ENCODE measurements at regions of chr15 and their contacts with region 1.

Region 1: GRCh38 chr15:68252925-68253534 is 23.5 kb upstream of the CLN6 start:
- DNase-seq: peak; percentile 76
- H3K4me3 ChIP-seq: no peak overlapping the region
- H3K27ac ChIP-seq: no peak overlapping the region
- H3K4me1 ChIP-seq: peaks cover 19% of the 10 kb centered on the region
- H3K27me3 ChIP-seq: no peaks in the 10 kb centered on the region
- CTCF ChIP-seq: peak; percentile 84 to 96

Region 2: GRCh38 chr15:68271854-68272471 is 18.9 kb after region 1 on chr15:
- CTCF ChIA-PET with region 1: no interaction called
- dilution Hi-C with region 1: no loop called
- in situ Hi-C with region 1: no loop called
- intact Hi-C with region 1: loop called (anchors 1 kb)
- DNase-seq: peak; percentile 100
- H3K4me3 ChIP-seq: no peak overlapping the region
- H3K27ac ChIP-seq: peak overlapping the region; percentile 100
- H3K4me1 ChIP-seq: peaks cover 71% of the 10 kb centered on the region
- H3K27me3 ChIP-seq: no peaks in the 10 kb centered on the region
- CTCF ChIP-seq: no peak

Region 3: DNA sequence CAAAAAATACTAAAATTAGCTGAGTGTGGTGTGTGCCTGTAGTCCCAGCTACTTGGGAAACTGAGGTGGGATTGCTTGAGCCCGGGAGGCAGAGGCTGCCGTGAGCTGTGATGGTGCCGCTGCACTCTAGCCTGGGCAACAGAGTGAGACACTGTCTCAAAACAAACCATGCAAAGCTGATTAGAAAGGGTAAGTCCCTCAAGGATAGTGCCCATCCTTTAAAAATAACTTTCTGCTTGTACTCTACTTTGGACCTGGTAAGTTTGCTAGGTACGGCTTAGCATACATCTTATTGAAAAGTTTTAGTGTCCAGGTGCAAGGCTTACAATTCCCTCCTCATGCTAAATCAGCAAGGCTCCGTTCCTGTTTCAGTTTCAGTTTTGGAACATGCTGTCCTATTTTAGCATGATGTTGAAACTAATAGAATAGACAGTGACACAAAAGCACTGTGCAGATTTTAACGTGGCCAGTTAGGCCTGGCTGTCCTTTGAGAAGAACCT is 45.9 kb after region 1 on chr15:
- CTCF ChIA-PET with region 1: interaction called, 8 read pairs
- dilution Hi-C with region 1: no loop called
- in situ Hi-C with region 1: loop called in 1 of 2 experiments (anchors 10 kb)
- intact Hi-C with region 1: no loop called
- DNase-seq: no peak
- H3K4me3 ChIP-seq: no peak overlapping the region
- H3K27ac ChIP-seq: no peak overlapping the region
- H3K4me1 ChIP-seq: peaks cover 5% of the 10 kb centered on the region
- H3K27me3 ChIP-seq: no peaks in the 10 kb centered on the region
- CTCF ChIP-seq: no peak

Region 4: DNA sequence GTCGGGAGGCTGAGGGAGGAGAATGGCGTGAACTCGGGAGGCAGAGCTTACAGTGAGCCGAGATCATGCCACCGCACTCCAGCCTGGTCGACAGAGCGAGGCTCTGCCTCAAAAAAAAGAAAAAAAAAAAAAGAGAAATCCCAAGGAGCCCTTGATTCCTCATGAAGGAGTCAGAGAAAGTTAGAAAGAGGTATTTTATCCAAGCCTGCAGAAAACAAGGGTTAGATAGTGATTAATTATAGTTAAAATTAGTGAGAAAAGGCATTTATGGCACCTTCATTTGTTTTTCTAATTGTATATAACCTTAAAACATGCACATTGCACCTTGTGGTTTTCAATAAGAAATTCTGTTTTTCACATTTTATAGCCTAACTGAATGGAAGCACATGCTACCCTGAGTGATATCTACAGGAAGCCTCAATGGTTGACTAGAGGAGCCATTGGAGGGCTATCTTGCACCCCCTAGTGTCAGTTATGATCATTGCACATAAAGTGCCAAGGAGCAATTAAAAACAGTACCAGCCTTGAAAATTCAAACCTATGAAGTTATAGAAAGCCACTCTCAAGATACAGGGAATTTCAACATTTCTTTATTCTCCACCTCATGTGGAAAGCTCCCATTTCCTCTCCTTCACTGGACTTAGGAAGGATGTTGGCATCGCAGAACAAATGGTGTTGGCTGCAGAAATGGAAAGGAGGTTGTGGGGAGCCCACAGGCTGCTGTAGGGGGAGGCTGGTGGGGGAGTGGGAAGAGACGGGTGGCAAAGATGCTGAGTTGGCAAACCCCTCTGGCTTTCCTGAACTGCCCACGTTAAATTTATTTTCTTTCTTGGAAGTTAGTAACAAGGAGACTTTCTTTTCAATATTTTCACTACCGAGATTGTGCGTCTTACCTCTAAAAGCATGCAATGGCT is 130.4 kb after region 1 on chr15:
- CTCF ChIA-PET with region 1: no interaction called
- dilution Hi-C with region 1: no loop called
- in situ Hi-C with region 1: loop called in 1 of 2 experiments (anchors 25 kb)
- intact Hi-C with region 1: loop called (anchors 1 kb)
- DNase-seq: peak; percentile 43
- H3K4me3 ChIP-seq: no peak overlapping the region
- H3K27ac ChIP-seq: no peak overlapping the region
- H3K4me1 ChIP-seq: peaks cover 18% of the 10 kb centered on the region
- H3K27me3 ChIP-seq: no peaks in the 10 kb centered on the region
- CTCF ChIP-seq: peak; percentile 80 to 95

Region 5: GRCh38 chr15:68550481-68551295 is 297.7 kb after region 1 on chr15:
- CTCF ChIA-PET with region 1: interaction called, 4 read pairs
- dilution Hi-C with region 1: no loop called
- in situ Hi-C with region 1: no loop called
- intact Hi-C with region 1: loop called (anchors 2 kb)
- DNase-seq: peak; percentile 37
- H3K4me3 ChIP-seq: no peak overlapping the region
- H3K27ac ChIP-seq: no peak overlapping the region
- H3K4me1 ChIP-seq: no peaks in the 10 kb centered on the region
- H3K27me3 ChIP-seq: no peaks in the 10 kb centered on the region
- CTCF ChIP-seq: peak; percentile 82 to 89

Measured in mammary epithelial cell (primary cell).